ENCODE measurements at regions of chr19 and their contacts with region 1.

Region 1: GRCh38 chr19:3984908-3985642 is at the start of gene EEF2:
- DNase-seq: peak; percentile 79
- H3K4me3 ChIP-seq: peak within 1 kb of the TSS; percentile 77 to 95 (median 82)
- H3K27ac ChIP-seq: peak within 1 kb of the TSS; percentile 85
- H3K4me1 ChIP-seq: peaks cover 55% of the 10 kb centered on the region
- H3K27me3 ChIP-seq: no peaks in the 10 kb centered on the region
- CTCF ChIP-seq: no peak
- total RNA-seq, gene EEF2: 2,299 to 2,969 TPM

Region 2: DNA sequence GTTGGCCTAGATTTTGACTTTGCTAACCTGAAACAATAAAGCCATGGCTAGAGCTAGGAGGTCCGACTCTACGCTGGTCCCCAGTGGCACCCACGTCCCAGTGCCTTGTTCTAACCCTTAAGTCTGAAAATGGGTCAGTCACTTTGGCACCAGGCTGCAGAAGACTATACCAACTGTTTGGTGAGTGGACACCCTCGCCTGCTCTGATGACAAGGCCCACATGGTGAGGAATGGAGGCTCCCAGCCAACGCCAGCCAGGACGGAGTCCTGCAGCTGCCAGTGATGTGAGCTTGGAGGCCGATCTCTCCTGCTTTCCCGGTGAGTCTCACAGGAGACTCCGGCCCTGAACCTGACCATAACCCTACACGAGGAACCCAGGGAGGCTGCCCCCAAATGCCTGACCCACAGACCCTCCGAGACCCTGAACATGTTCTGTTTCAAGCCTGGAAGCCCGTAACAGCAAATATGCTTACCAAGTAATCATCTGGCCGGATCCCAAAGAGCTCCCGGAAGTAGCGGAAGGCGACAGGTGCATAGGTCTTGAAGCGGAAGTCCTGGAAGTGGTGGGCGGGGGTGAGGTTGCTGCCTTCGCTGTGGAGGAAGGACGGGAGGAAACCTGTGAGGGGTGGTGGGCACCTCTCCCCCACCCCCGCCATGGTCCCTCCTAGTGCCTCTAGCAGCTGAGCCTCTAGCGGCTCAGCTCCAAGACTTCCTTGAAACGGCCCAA is 324.4 kb before region 1 on chr19:
- CTCF ChIA-PET with region 1: interaction called, 15 read pairs
- dilution Hi-C with region 1: no loop called
- in situ Hi-C with region 1: no loop called
- intact Hi-C with region 1: no loop called
- DNase-seq: no peak
- H3K4me3 ChIP-seq: no peak overlapping the region
- H3K27ac ChIP-seq: no peak overlapping the region
- H3K4me1 ChIP-seq: peaks cover 14% of the 10 kb centered on the region
- H3K27me3 ChIP-seq: no peaks in the 10 kb centered on the region
- CTCF ChIP-seq: no peak

Region 3: GRCh38 chr19:3801412-3802096 is 183.5 kb before region 1 on chr19:
- CTCF ChIA-PET with region 1: no interaction called
- dilution Hi-C with region 1: no loop called
- in situ Hi-C with region 1: no loop called
- intact Hi-C with region 1: no loop called
- DNase-seq: peak; percentile 24
- H3K4me3 ChIP-seq: no peak overlapping the region
- H3K27ac ChIP-seq: no peak overlapping the region
- H3K4me1 ChIP-seq: peaks cover 6% of the 10 kb centered on the region
- H3K27me3 ChIP-seq: peaks cover 14% of the 10 kb centered on the region
- CTCF ChIP-seq: peak in 1 of 2 donors; percentile 31

Region 4: GRCh38 chr19:3852614-3853254 is 132.3 kb before region 1 on chr19:
- CTCF ChIA-PET with region 1: no interaction called
- dilution Hi-C with region 1: loop called (anchors 5 kb)
- in situ Hi-C with region 1: no loop called
- intact Hi-C with region 1: loop called (anchors 1 kb)
- DNase-seq: peak; percentile 95
- H3K4me3 ChIP-seq: no peak overlapping the region
- H3K27ac ChIP-seq: no peak overlapping the region
- H3K4me1 ChIP-seq: no peaks in the 10 kb centered on the region
- H3K27me3 ChIP-seq: peaks cover 22% of the 10 kb centered on the region
- CTCF ChIP-seq: peak; percentile 25 to 68

Region 5: GRCh38 chr19:3950871-3951861 is 33.9 kb before region 1 on chr19:
- CTCF ChIA-PET with region 1: interaction called, 22 read pairs
- dilution Hi-C with region 1: loop called (anchors 5 kb)
- in situ Hi-C with region 1: no loop called
- intact Hi-C with region 1: no loop called
- DNase-seq: no peak
- H3K4me3 ChIP-seq: no peak overlapping the region
- H3K27ac ChIP-seq: no peak overlapping the region
- H3K4me1 ChIP-seq: no peaks in the 10 kb centered on the region
- H3K27me3 ChIP-seq: no peaks in the 10 kb centered on the region
- CTCF ChIP-seq: no peak

Region 6: GRCh38 chr19:4034048-4035017 is 49.3 kb after region 1 on chr19:
- CTCF ChIA-PET with region 1: interaction called, 28 read pairs
- dilution Hi-C with region 1: no loop called
- in situ Hi-C with region 1: no loop called
- intact Hi-C with region 1: no loop called
- DNase-seq: no peak
- H3K4me3 ChIP-seq: no peak overlapping the region
- H3K27ac ChIP-seq: no peak overlapping the region
- H3K4me1 ChIP-seq: no peaks in the 10 kb centered on the region
- H3K27me3 ChIP-seq: no peaks in the 10 kb centered on the region
- CTCF ChIP-seq: no peak

Region 7: GRCh38 chr19:4172861-4173473 is 187.9 kb after region 1 on chr19:
- CTCF ChIA-PET with region 1: interaction called, 16 read pairs
- dilution Hi-C with region 1: no loop called
- in situ Hi-C with region 1: no loop called
- intact Hi-C with region 1: no loop called
- DNase-seq: peak; percentile 36
- H3K4me3 ChIP-seq: no peak overlapping the region
- H3K27ac ChIP-seq: no peak overlapping the region
- H3K4me1 ChIP-seq: no peaks in the 10 kb centered on the region
- H3K27me3 ChIP-seq: peaks cover 2% of the 10 kb centered on the region
- CTCF ChIP-seq: no peak

Region 8: GRCh38 chr19:4208385-4209094 is 223.5 kb after region 1 on chr19:
- CTCF ChIA-PET with region 1: interaction called, 8 read pairs
- dilution Hi-C with region 1: loop called (anchors 5 kb)
- in situ Hi-C with region 1: loop called in 1 of 2 experiments (anchors 10 kb)
- intact Hi-C with region 1: loop called (anchors 1 kb)
- DNase-seq: peak; percentile 45
- H3K4me3 ChIP-seq: no peak overlapping the region
- H3K27ac ChIP-seq: no peak overlapping the region
- H3K4me1 ChIP-seq: no peaks in the 10 kb centered on the region
- H3K27me3 ChIP-seq: no peaks in the 10 kb centered on the region
- CTCF ChIP-seq: peak; percentile 20 to 37